ENCODE measurements at regions of chr11 and their contacts with region 1.

Region 1: DNA sequence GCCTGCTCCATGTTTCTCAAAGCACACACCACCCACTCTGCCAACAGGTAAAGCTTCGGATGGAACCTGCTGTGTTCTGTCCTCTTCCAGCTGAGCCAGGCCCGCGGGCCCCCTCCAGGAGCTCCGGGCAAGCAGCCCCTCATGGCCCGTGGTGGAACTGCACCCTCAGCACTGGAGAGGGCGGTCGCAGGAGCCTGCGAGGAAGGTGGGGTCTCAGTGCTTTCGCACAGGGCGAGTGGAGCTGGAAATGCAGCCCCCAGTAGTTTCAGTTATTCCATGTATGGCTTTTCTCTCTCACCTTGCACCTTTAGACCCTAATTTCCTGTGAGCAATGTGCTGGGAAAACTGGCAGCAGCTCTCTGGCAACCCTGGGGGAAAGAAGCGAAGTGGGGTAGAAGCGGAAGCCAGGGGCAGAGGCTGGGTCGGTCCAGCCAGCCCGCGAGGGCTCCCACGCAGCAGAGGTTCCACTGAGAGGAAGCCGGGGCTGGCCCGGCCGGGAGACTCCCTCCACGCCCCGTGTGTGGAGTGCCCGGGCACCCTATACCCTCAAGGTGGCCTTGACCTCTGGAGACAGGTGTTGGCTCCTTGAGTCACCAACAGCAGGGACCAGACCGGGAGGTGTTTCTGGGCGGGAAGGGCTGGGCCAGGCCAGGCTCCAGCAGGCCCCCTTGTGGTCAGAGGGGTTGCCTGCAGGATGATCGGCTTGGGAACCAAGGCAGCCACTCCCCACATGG is 119.9 kb upstream of the TMEM45B start:
- DNase-seq: peak; percentile 48 to 60 (median 59)
- H3K4me3 ChIP-seq: peak overlapping the region; percentile 46 to 69
- H3K4me3 Mint-ChIP-seq: peak overlapping the region; percentile 76 to 90 (median 84)
- H3K27ac ChIP-seq: no peak overlapping the region
- H3K27ac Mint-ChIP-seq: peak overlapping the region in 4 of 7 donors; percentile 39 to 66 (median 50)
- H3K4me1 ChIP-seq: peaks cover 6% of the 10 kb centered on the region
- H3K4me1 Mint-ChIP-seq: peaks cover 7 to 19% (median 9%) of the 10 kb centered on the region in 4 donors
- H3K27me3 ChIP-seq: no peaks in the 10 kb centered on the region
- H3K27me3 Mint-ChIP-seq: no peaks in the 10 kb centered on the region

Region 2: DNA sequence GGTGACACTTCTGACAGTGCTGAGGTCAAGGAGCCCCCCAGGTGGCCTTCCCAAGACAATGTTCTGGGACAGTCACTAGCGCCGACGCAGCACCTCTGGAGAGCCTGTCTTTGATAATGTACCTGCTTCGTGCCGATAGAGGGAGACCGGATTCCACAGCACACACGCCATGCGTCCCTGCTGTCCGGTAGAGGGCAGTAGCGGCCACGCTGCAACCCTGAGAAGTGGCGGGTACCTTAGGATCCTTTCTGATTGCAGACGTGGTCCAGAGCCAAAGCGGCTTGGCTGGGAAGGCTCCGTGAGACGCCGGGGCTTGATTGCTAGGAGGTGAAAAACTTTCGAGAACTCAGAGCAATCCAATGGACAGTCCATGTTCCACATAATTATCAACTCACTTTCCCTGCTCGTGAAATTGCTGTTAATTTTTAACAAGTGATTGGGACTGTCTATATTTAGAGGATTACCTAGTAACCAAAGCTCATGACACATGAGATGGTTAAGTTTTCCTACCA is 331.5 kb before region 1 on chr11:
- CTCF ChIA-PET with region 1: interaction called, 5 read pairs
- POLR2A ChIA-PET with region 1: no interaction called
- intact Hi-C with region 1: loop called (anchors 1 kb)
- DNase-seq: peak; percentile 63 to 73 (median 69)
- H3K4me3 ChIP-seq: no peak overlapping the region
- H3K4me3 Mint-ChIP-seq: no peak overlapping the region
- H3K27ac ChIP-seq: no peak overlapping the region
- H3K27ac Mint-ChIP-seq: no peak overlapping the region
- H3K4me1 ChIP-seq: peaks cover 4% of the 10 kb centered on the region
- H3K4me1 Mint-ChIP-seq: no peaks in the 10 kb centered on the region
- H3K27me3 ChIP-seq: peaks cover 6% of the 10 kb centered on the region
- H3K27me3 Mint-ChIP-seq: peaks cover 25 to 32% of the 10 kb centered on the region in 2 donors

Region 3: DNA sequence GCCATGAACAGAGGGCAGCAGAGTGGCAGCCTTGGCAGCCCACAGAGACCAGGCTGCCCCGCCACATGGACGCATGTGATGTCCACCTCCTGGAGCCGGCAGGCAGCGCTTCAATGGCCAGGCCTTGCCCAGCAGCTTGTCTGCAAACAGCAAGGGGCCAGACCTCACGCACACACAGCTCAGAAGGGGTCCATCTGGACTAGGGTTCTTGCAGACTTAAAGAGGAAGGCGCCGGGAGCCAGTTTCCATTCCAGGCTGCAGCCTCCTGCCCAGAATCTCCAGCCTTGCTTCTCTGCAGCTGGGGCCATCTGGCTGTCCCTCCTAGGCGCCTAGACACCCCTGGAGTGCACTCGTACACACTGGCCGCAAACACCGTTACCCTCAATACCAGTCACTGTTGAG is 28.0 kb after region 1 on chr11:
- CTCF ChIA-PET with region 1: interaction called, 10 read pairs
- POLR2A ChIA-PET with region 1: no interaction called
- intact Hi-C with region 1: no loop called
- DNase-seq: no peak
- H3K4me3 ChIP-seq: no peak overlapping the region
- H3K4me3 Mint-ChIP-seq: peak overlapping the region in 1 of 8 donors; percentile 11
- H3K27ac ChIP-seq: no peak overlapping the region
- H3K27ac Mint-ChIP-seq: peak overlapping the region in 2 of 7 donors; percentile 7 to 16
- H3K4me1 ChIP-seq: peaks cover 10% of the 10 kb centered on the region
- H3K4me1 Mint-ChIP-seq: peaks cover 11 to 13% (median 12%) of the 10 kb centered on the region in 4 donors
- H3K27me3 ChIP-seq: no peaks in the 10 kb centered on the region
- H3K27me3 Mint-ChIP-seq: no peaks in the 10 kb centered on the region

Measured in CD4-positive, alpha-beta memory T cell (primary cell).